ENCODE measurements at regions of chr4 and their contacts with region 1.

Region 1: DNA sequence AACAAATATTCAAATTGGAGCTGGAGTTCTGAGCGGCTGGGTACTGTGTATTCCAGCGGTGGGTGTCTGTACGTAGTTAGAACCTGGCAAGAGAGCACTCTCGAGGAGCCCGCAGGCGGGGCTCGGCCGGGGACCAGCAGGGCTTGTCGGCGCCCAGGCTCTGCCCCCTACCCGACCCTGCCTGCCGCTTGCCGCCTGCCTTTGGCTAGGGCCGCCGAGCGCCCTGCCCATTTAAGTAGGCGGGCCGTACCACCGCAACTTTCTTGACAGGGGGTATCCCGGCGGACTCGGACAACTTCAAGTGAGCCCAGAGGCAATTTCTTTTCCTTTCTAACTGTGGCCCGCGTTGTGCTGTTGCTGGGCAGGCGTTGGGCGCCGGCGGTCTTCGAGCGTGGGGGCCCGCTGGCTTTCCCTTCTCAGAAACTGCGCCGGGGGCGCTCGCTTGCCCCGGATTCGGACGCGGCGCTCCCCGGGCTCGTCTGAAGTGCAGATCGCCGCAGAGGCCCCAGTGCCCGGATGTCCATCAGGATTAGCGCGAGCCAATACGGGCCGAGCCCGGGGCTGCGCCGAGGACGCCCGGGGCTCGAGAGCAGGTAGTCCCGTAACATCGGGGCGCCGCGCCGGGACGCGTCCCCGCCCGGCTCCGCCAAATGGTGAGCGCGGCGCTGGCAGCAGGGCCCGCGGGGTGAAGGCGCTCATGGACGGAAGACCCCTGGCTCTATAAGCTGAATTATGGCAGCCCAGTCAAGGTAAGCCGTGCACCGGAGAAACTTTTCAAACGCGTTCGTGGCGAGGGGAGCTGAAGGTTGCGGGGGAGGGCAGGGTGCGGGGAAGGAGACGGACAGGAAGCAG is 72.1 kb downstream of the AFF1 start:
- DNase-seq: peak; percentile 94
- ATAC-seq: peak; percentile 79 to 93 (median 84)
- H3K4me3 ChIP-seq: peak overlapping the region; percentile 84
- H3K4me3 Mint-ChIP-seq: peak overlapping the region; percentile 97
- H3K27ac ChIP-seq: peak overlapping the region; percentile 95
- H3K27ac Mint-ChIP-seq: peak overlapping the region; percentile 97 to 99
- H3K4me1 ChIP-seq: peaks cover 16% of the 10 kb centered on the region
- H3K4me1 Mint-ChIP-seq: peaks cover 44 to 55% of the 10 kb centered on the region in 2 donors
- H3K27me3 ChIP-seq: no peaks in the 10 kb centered on the region
- H3K27me3 Mint-ChIP-seq: no peaks in the 10 kb centered on the region
- CTCF ChIP-seq: peak; percentile 11

Region 2: GRCh38 chr4:86934771-86935565 is 71.9 kb before region 1 on chr4 and contains the start of gene AFF1:
- intact Hi-C with region 1: loop called (anchors 1 kb)
- DNase-seq: peak; percentile 81 to 96
- ATAC-seq: peak; percentile 69 to 91 (median 85)
- H3K4me3 ChIP-seq: peak within 1 kb of the TSS; percentile 84
- H3K4me3 Mint-ChIP-seq: peak within 1 kb of the TSS; percentile 98
- H3K27ac ChIP-seq: peak within 1 kb of the TSS; percentile 84
- H3K27ac Mint-ChIP-seq: peak within 1 kb of the TSS; percentile 86 to 90
- H3K4me1 ChIP-seq: peaks cover 28% of the 10 kb centered on the region
- H3K4me1 Mint-ChIP-seq: peaks cover 44 to 54% of the 10 kb centered on the region in 2 donors
- H3K27me3 ChIP-seq: no peaks in the 10 kb centered on the region
- H3K27me3 Mint-ChIP-seq: no peaks in the 10 kb centered on the region
- CTCF ChIP-seq: no peak
- total RNA-seq, gene AFF1: 87.9 to 93.4 (median 91.7) TPM

Region 3: GRCh38 chr4:87026800-87027495 is 20.0 kb after region 1 on chr4:
- intact Hi-C with region 1: no loop called
- DNase-seq: no peak
- ATAC-seq: peak in 2 of 3 donors; percentile 30 to 60
- H3K4me3 ChIP-seq: no peak overlapping the region
- H3K4me3 Mint-ChIP-seq: no peak overlapping the region
- H3K27ac ChIP-seq: no peak overlapping the region
- H3K27ac Mint-ChIP-seq: peak overlapping the region; percentile 51 to 53
- H3K4me1 ChIP-seq: peaks cover 4% of the 10 kb centered on the region
- H3K4me1 Mint-ChIP-seq: peaks cover 35 to 41% of the 10 kb centered on the region in 2 donors
- H3K27me3 ChIP-seq: no peaks in the 10 kb centered on the region
- H3K27me3 Mint-ChIP-seq: no peaks in the 10 kb centered on the region
- CTCF ChIP-seq: no peak

Region 4: GRCh38 chr4:87073199-87074120 is 66.6 kb after region 1 on chr4:
- intact Hi-C with region 1: loop called (anchors 5 kb)
- DNase-seq: peak; percentile 32 to 69
- ATAC-seq: peak; percentile 89 to 97 (median 96)
- H3K4me3 ChIP-seq: peak overlapping the region; percentile 21
- H3K4me3 Mint-ChIP-seq: peak overlapping the region; percentile 76
- H3K27ac ChIP-seq: peak overlapping the region; percentile 61
- H3K27ac Mint-ChIP-seq: peak overlapping the region; percentile 67 to 83
- H3K4me1 ChIP-seq: peaks cover 8% of the 10 kb centered on the region
- H3K4me1 Mint-ChIP-seq: peaks cover 48 to 62% of the 10 kb centered on the region in 2 donors
- H3K27me3 ChIP-seq: no peaks in the 10 kb centered on the region
- H3K27me3 Mint-ChIP-seq: no peaks in the 10 kb centered on the region
- CTCF ChIP-seq: no peak

Region 5: GRCh38 chr4:87093443-87094123 is 86.7 kb after region 1 on chr4:
- intact Hi-C with region 1: loop called (anchors 5 kb)
- DNase-seq: peak in 1 of 2 donors; percentile 73
- ATAC-seq: peak; percentile 76 to 92 (median 81)
- H3K4me3 ChIP-seq: no peak overlapping the region
- H3K4me3 Mint-ChIP-seq: no peak overlapping the region
- H3K27ac ChIP-seq: no peak overlapping the region
- H3K27ac Mint-ChIP-seq: peak overlapping the region; percentile 26 to 66
- H3K4me1 ChIP-seq: no peaks in the 10 kb centered on the region
- H3K4me1 Mint-ChIP-seq: peaks cover 20 to 24% of the 10 kb centered on the region in 2 donors
- H3K27me3 ChIP-seq: no peaks in the 10 kb centered on the region
- H3K27me3 Mint-ChIP-seq: no peaks in the 10 kb centered on the region
- CTCF ChIP-seq: peak; percentile 62

Region 6: GRCh38 chr4:87220094-87220822 is 213.4 kb after region 1 on chr4 and contains the start of gene KLHL8:
- intact Hi-C with region 1: loop called (anchors 2 kb)
- DNase-seq: peak; percentile 85 to 93
- ATAC-seq: peak; percentile 90 to 98 (median 92)
- H3K4me3 ChIP-seq: peak within 1 kb of the TSS; percentile 98
- H3K4me3 Mint-ChIP-seq: peak within 1 kb of the TSS; percentile 94
- H3K27ac ChIP-seq: peak within 1 kb of the TSS; percentile 80
- H3K27ac Mint-ChIP-seq: peak within 1 kb of the TSS; percentile 87 to 91
- H3K4me1 ChIP-seq: peaks cover 18% of the 10 kb centered on the region
- H3K4me1 Mint-ChIP-seq: peaks cover 7 to 12% of the 10 kb centered on the region in 2 donors
- H3K27me3 ChIP-seq: no peaks in the 10 kb centered on the region
- H3K27me3 Mint-ChIP-seq: no peaks in the 10 kb centered on the region
- CTCF ChIP-seq: no peak
- total RNA-seq, gene KLHL8: 8.3 to 11.2 (median 9.1) TPM

Region 7: DNA sequence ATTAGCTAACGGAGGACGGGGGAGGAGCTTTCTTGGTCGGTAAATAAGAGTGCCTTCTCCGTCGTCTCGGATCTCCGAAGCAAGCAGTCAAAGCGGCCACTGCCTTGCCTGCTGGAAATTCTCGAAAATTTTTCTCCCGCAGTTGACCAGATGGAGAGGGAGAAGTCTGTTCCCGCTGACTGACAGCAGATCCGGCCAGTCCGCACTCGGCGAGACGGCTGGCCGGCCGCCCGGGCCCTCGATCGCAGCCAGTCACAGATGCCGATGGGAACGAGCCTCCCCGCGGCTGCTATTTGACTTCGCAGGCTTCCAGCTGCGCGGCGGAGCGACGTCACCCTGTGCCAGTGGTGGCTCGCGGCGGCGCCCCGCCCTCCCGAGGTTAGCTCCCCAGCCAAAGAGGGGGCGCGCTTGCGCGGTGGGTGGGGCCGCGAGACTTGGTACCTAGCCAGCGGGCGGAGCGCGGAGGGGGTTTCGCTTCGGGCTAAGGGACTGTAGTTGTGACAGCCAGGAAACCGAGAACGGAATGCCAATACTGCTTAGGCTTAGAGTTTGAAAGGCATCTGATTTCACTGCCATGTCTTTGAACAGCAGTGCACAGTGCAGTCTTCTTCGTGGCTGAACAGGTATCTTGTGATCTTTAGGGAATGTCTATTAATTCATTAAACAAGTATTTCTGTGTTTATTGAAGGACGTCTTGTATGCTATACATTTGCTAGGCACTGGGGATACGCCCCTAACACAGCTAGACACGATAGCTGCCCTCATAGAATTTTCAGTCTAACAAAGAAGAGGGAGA is 1277.7 kb after region 1 on chr4 and contains the start of gene PPM1K:
- intact Hi-C with region 1: loop called (anchors 5 kb)
- DNase-seq: peak; percentile 99
- ATAC-seq: peak; percentile 80 to 95 (median 86)
- H3K4me3 ChIP-seq: peak within 1 kb of the TSS; percentile 85
- H3K4me3 Mint-ChIP-seq: peak within 1 kb of the TSS; percentile 99
- H3K27ac ChIP-seq: peak within 1 kb of the TSS; percentile 96
- H3K27ac Mint-ChIP-seq: peak within 1 kb of the TSS; percentile 92 to 100
- H3K4me1 ChIP-seq: peaks cover 26% of the 10 kb centered on the region
- H3K4me1 Mint-ChIP-seq: peaks cover 46 to 52% of the 10 kb centered on the region in 2 donors
- H3K27me3 ChIP-seq: no peaks in the 10 kb centered on the region
- H3K27me3 Mint-ChIP-seq: no peaks in the 10 kb centered on the region
- CTCF ChIP-seq: no peak
- total RNA-seq, gene PPM1K: 68.0 to 76.8 (median 74.3) TPM

Region 8: GRCh38 chr4:88456757-88457306 is 1449.9 kb after region 1 on chr4 and contains the start of gene HERC5:
- intact Hi-C with region 1: loop called (anchors 10 kb)
- DNase-seq: peak; percentile 92 to 96
- ATAC-seq: peak; percentile 91 to 98 (median 94)
- H3K4me3 ChIP-seq: peak within 1 kb of the TSS; percentile 95
- H3K4me3 Mint-ChIP-seq: peak within 1 kb of the TSS; percentile 100
- H3K27ac ChIP-seq: peak within 1 kb of the TSS; percentile 81
- H3K27ac Mint-ChIP-seq: peak within 1 kb of the TSS; percentile 95 to 97
- H3K4me1 ChIP-seq: peaks cover 11% of the 10 kb centered on the region
- H3K4me1 Mint-ChIP-seq: peaks cover 24 to 26% of the 10 kb centered on the region in 2 donors
- H3K27me3 ChIP-seq: no peaks in the 10 kb centered on the region
- H3K27me3 Mint-ChIP-seq: no peaks in the 10 kb centered on the region
- CTCF ChIP-seq: no peak
- total RNA-seq, gene HERC5: 11.0 to 19.4 (median 17.9) TPM

Measured in natural killer cell (primary cell).